HEK293 (cell line): ENCODE measurements at regions of chr1 and their contacts with region 1.

Region 1: DNA sequence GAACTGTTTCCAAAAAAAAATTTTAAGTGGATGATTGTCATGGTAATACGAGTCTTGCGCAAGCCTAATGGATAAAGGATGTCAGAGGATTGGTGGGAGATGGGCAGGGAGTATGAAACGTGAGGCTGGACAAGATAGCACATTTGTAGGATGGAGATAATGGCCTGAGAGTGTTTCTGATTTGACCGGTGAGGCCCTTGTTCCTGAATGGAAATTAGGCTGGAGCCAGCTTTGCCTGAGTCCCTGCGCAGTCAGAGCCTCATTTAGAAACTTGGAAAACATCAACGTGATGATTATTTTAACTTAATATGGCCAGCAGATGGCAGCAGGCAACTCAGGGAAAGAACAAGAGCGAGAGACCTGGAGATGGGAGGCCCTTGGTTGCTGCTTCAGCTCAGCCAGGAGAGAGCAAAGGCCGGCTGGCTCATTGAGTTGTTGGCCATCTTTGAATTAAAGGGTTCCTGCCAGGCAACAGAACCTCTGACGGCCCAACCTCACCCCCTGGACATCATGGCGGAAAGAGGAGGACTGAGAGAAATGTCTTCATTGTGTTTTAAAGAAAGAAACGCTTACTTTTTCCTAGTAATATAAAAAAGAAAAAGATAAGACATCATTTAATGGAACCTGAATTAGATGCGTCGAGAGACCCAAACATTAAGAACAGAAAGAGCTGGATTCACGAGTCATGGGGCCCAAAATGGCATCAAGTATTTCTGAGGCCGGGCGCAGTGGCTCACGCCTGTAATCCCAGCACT is 80.3 kb downstream of the SELENOF start:
- H3K4me3 ChIP-seq: no peak overlapping the region
- H3K27ac ChIP-seq: no peak overlapping the region
- H3K4me1 ChIP-seq: no peaks in the 10 kb centered on the region
- CTCF ChIP-seq: peak; percentile 82

Region 2: GRCh38 chr1:86846166-86846647 is 12.6 kb after region 1 on chr1:
- CTCF ChIA-PET with region 1: interaction called, 13 read pairs
- POLR2A ChIA-PET with region 1: no interaction called
- H3K4me3 ChIP-seq: no peak overlapping the region
- H3K27ac ChIP-seq: no peak overlapping the region; the same call in 1 of the 2 replicates
- H3K4me1 ChIP-seq: 0 out of 2 replicates have a peak, but pooled peaks cover 5% of the 10 kb centered on the region
- CTCF ChIP-seq: no peak

Region 3: DNA sequence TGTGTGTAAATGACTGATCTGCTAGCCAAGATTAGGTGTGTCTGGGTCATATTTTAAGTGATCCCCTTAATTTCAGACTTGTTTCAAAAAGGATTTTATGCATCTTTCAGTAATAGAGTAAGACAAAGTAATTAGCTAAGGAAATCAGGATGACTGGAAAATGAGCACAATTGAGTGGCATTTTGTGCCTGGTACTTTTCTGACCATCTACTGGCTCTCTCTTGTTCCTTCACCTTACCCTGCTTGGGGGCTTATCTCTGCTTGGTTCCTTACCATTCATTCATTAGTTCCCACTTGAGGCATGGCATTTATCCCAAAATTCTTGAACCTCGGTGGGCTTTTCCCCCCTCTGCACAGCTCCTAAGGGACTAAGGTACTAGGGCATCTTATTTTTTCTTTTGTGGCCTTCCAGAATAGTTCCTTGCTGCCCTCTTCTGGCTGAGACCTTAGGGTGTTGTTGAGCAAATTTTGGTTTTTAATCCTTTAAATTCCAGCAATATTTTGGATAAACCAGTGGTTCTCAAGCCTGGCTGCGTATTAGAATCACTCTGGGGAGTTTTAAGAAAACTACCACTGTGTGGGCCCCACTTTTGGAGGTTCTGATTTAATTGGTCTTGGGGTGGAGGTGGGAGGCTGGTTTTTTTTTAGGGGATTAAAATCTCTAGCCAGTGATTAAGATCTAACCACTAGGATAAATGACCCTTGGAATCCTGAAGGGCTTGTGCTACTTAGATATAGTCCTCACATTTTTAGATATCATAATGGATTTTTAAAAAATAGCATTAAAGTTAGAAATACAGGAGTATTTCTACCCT is 131.6 kb after region 1 on chr1:
- CTCF ChIA-PET with region 1: interaction called, 11 read pairs
- POLR2A ChIA-PET with region 1: no interaction called
- H3K4me3 ChIP-seq: no peak overlapping the region
- H3K27ac ChIP-seq: no peak overlapping the region
- H3K4me1 ChIP-seq: no peaks in the 10 kb centered on the region
- CTCF ChIP-seq: peak; percentile 60